T-cell (primary cell): ENCODE measurements at regions of chr2 and their contacts with region 1.

Region 1: DNA sequence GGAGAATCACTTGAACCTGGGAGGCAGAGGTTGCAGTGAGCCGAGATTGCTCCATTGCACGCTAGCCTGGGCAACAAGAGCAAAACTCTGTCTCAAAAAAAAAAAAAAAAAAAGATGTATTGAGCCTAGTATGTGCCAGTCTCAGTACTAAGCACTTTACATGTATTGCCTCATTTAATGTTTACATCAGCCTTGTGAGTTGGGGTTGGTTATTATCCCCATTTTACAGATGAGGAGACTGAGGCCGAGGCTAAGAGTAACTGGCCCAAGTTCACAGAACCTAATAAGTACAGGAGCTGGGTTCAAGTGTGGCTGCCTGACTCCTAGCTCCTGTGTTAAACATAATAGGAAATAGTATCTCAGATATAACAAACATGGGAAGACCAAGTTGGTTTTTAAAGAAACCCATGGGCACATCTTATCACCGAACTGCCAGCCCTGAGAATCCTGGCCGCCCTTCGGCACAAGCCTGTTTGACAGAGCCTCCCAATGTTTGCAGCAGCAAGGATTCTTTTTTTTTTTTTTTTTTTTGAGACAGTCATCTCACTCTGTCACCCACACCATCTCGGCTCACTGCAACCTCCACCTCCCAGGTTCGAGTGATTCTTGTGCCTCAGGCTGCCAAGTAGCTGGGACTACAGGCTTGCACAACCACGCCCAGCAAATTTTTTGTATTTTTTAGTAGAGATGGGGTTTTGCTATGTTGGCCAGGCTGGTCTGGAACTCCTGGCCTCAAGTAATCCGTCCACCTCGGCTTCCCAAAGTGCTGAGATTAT is 24.2 kb upstream of the GMPPA start:
- DNase-seq: no peak
- ATAC-seq: no peak
- H3K4me3 ChIP-seq: no peak overlapping the region
- H3K4me3 Mint-ChIP-seq: no peak overlapping the region
- H3K27ac ChIP-seq: no peak overlapping the region
- H3K27ac Mint-ChIP-seq: no peak overlapping the region
- H3K4me1 ChIP-seq: no peaks in the 10 kb centered on the region
- H3K4me1 Mint-ChIP-seq: peaks cover 4 to 5% (median 4%) of the 10 kb centered on the region in 3 donors
- H3K27me3 ChIP-seq: peaks cover 0 to 46% of the 10 kb centered on the region in 2 experiments
- H3K27me3 Mint-ChIP-seq: peaks cover 0 to 11% of the 10 kb centered on the region in 2 donors

Region 2: DNA sequence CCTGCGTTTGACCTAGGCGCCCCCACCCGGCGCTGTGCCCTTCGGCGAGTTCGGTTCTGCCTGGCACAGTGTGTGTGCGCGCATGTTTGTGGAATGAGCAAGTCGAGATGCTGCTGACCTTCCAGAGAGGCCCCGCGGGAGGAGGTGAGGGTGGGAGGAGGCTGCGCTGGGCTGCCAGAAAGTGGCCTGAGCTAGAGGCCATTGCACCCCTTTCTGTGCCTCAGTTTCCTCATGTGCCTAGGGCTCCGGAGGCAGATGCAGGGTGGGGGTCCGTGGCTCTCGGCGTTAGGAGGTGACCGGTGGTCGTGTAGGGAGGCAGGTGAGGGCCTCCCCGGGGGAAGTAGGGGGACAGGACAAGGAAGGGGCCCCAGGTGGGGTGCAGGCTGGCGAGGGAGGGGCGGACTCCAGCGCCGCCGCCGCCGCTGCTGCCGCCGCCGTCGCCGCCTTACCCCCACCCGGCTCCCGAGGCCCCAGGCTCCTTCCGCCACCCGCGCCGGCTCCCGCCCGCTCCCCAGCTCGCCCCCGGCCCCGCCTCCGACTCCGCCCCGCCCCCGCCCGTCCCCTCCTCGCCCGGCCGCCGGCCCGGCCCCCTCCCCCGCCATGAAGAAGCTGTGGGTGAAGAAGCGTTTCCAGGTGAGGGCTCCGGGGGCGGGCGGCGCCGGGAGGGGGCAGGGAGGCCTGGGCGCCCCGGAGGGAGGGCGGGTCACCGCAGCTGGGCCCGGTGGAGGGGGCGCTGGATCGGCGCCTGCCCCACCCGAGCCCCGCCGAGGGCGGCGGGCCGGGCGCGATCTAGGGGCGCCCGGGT is 32.8 kb before region 1 on chr2:
- CTCF ChIA-PET with region 1: no interaction called
- POLR2A ChIA-PET with region 1: interaction called in 1 of 2 experiments, 10 read pairs
- DNase-seq: peak; percentile 12 to 71 (median 42)
- ATAC-seq: peak; percentile 80 to 89 (median 85)
- H3K4me3 ChIP-seq: peak overlapping the region; percentile 44 to 81
- H3K4me3 Mint-ChIP-seq: peak overlapping the region; percentile 71 to 89 (median 80)
- H3K27ac ChIP-seq: no peak overlapping the region
- H3K27ac Mint-ChIP-seq: peak overlapping the region in 1 of 2 donors; percentile 44
- H3K4me1 ChIP-seq: peaks cover 3 to 15% of the 10 kb centered on the region in 2 experiments
- H3K4me1 Mint-ChIP-seq: peaks cover 16 to 19% (median 19%) of the 10 kb centered on the region in 3 donors
- H3K27me3 ChIP-seq: peaks cover 0 to 62% of the 10 kb centered on the region in 2 experiments
- H3K27me3 Mint-ChIP-seq: peaks cover 0 to 24% of the 10 kb centered on the region in 2 donors

Region 3: DNA sequence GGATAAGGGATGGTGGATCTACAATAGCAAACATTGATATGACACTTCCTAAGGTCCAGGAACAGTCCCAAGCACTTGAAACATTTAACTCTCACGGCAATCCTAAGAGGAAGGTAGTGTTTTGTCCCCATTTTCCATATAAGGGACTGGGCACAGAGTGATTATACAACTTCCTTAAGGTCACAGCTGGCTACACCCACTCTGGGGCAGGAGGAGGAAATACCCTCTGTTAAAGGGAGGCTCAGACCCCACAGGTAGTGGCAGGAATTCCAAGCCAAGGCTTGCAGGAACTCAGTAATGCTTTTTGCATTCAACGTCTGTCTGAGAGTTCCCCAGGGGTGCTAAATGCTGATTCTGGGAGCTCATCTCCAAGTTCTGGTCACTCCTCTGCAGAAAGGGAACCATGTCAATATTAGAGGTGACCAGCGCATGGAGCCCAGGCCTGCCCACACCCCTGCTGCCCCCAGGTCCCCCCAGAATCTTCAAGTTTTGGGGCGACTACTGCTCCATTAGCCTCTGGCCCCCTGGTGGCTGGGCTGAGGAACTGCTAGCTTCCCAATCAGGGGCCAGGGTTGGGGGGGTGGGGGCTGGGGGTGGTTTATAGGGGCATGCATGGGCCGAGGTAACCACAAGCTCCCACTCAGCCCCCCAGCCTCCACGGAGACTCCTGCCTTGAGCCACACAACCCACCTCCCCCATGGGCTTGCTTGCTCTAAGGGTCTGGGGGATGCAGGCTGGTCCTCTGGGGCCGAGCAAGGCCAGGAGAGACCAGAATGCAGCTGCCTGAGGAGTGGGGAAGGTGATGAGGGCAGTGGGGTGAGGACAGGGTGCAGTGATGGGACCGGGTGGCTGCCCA is 85.8 kb after region 1 on chr2:
- CTCF ChIA-PET with region 1: no interaction called
- POLR2A ChIA-PET with region 1: no interaction called
- DNase-seq: peak in 4 of 35 experiments; percentile 25 to 49 (median 32)
- ATAC-seq: peak; percentile 38 to 67 (median 51)
- H3K4me3 ChIP-seq: no peak overlapping the region
- H3K4me3 Mint-ChIP-seq: no peak overlapping the region
- H3K27ac ChIP-seq: no peak overlapping the region
- H3K27ac Mint-ChIP-seq: no peak overlapping the region
- H3K4me1 ChIP-seq: no peaks in the 10 kb centered on the region
- H3K4me1 Mint-ChIP-seq: no peaks in the 10 kb centered on the region
- H3K27me3 ChIP-seq: peaks cover 0 to 75% of the 10 kb centered on the region in 2 experiments
- H3K27me3 Mint-ChIP-seq: peaks cover 19 to 25% of the 10 kb centered on the region in 2 donors